ENCODE measurements at regions of chr21 and their contacts with region 1.

Region 1: GRCh38 chr21:37098751-37099150 is 25.7 kb downstream of the TTC3 start:
- DNase-seq: no peak
- H3K4me3 ChIP-seq: no peak overlapping the region
- H3K27ac ChIP-seq: no peak overlapping the region
- H3K4me1 ChIP-seq: peaks cover 0 to 3% (median 0%) of the 10 kb centered on the region in 4 experiments
- H3K27me3 ChIP-seq: no peaks in the 10 kb centered on the region

Region 2: DNA sequence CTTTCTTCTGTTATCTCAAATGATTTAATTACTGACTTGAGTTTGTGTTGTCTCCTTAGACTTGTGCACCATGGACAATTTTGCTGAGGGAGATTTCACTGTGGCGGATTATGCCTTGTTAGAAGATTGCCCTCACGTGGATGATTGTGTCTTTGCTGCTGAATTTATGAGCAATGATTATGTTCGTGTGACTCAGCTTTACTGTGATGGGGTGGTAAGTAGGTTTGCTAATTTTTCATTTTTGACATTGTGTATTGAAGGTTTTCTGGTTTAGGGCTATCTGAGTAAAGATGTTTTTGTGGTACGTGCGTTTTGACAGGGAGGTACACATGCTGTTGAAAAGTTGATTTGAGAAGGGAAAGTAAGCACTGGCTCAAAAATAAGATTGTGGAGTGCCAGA is 11.6 kb before region 1 on chr21:
- CTCF ChIA-PET with region 1: interaction called, 18 read pairs
- POLR2A ChIA-PET with region 1: no interaction called
- DNase-seq: peak; percentile 59 to 79 (median 76)
- H3K4me3 ChIP-seq: no peak overlapping the region
- H3K27ac ChIP-seq: no peak overlapping the region
- H3K4me1 ChIP-seq: peaks cover 7 to 18% (median 15%) of the 10 kb centered on the region in 4 experiments
- H3K27me3 ChIP-seq: no peaks in the 10 kb centered on the region

Region 3: GRCh38 chr21:37130971-37131370 is 32.2 kb after region 1 on chr21:
- CTCF ChIA-PET with region 1: no interaction called
- POLR2A ChIA-PET with region 1: no interaction called
- DNase-seq: no peak
- H3K4me3 ChIP-seq: no peak overlapping the region
- H3K27ac ChIP-seq: no peak overlapping the region
- H3K4me1 ChIP-seq: no peaks in the 10 kb centered on the region
- H3K27me3 ChIP-seq: no peaks in the 10 kb centered on the region

Region 4: GRCh38 chr21:37181059-37181458 is 82.3 kb after region 1 on chr21:
- CTCF ChIA-PET with region 1: no interaction called
- POLR2A ChIA-PET with region 1: no interaction called
- DNase-seq: no peak
- H3K4me3 ChIP-seq: no peak overlapping the region
- H3K27ac ChIP-seq: no peak overlapping the region
- H3K4me1 ChIP-seq: no peaks in the 10 kb centered on the region
- H3K27me3 ChIP-seq: no peaks in the 10 kb centered on the region

Region 5: GRCh38 chr21:37484535-37485474 is 386.1 kb after region 1 on chr21:
- CTCF ChIA-PET with region 1: no interaction called
- POLR2A ChIA-PET with region 1: no interaction called
- DNase-seq: no peak
- H3K4me3 ChIP-seq: no peak overlapping the region
- H3K27ac ChIP-seq: no peak overlapping the region
- H3K4me1 ChIP-seq: peaks cover 0 to 2% (median under 1%) of the 10 kb centered on the region in 4 experiments
- H3K27me3 ChIP-seq: no peaks in the 10 kb centered on the region

Measured in common myeloid progenitor, CD34-positive (primary cell).